ENCODE measurements at regions of chr22 and their contacts with region 1.

Region 1: DNA sequence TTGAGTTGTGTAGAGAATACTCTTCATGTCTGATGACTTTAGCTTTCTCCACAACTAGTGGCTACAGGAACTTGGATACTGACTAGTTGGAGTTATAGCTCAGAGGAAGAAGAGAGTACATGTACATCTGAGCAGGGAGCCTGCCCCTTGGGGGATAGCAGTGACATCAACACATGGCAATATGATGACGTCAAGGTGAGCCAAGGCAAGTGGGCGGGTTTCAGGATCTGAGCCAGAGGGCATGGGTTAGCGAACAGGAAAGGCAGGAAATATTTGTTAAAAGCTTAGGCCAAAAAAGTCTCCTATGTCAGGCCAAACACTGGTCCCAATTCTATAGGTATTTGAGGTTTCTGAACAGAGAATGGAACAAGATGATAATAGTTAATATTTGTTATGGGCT is 42.0 kb upstream of the HORMAD2 start:
- DNase-seq: peak; percentile 61
- H3K4me3 ChIP-seq: no peak overlapping the region
- H3K27ac ChIP-seq: no peak overlapping the region
- H3K4me1 ChIP-seq: peaks cover 12% of the 10 kb centered on the region
- H3K27me3 ChIP-seq: no peaks in the 10 kb centered on the region
- CTCF ChIP-seq: no peak

Region 2: DNA sequence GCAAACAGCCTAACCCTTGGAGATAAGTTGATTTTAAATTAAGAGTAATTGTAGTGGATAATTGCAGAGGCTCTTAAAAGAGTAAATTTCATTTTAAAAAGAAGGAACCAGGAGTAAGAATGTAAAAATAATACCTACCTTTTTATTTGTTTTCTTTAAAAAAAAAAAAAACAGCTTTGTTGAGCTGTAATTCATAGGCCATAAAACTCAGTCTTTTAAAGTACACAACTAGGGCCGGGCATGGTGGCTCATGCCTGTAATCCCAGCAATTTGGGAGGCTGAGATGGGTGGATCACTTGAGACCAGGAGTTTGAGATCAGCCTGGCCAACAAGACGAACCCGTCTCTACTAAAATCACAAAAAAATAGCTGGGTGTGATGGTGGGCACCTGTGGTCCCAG is 112.8 kb before region 1 on chr22:
- CTCF ChIA-PET with region 1: no interaction called
- dilution Hi-C with region 1: no loop called
- in situ Hi-C with region 1: no loop called
- intact Hi-C with region 1: no loop called
- DNase-seq: no peak
- H3K4me3 ChIP-seq: no peak overlapping the region
- H3K27ac ChIP-seq: no peak overlapping the region
- H3K4me1 ChIP-seq: no peaks in the 10 kb centered on the region
- H3K27me3 ChIP-seq: no peaks in the 10 kb centered on the region
- CTCF ChIP-seq: no peak

Region 3: GRCh38 chr22:30094804-30095203 is 56.6 kb after region 1 on chr22:
- CTCF ChIA-PET with region 1: no interaction called
- dilution Hi-C with region 1: loop called (anchors 5 kb)
- in situ Hi-C with region 1: no loop called
- intact Hi-C with region 1: no loop called
- DNase-seq: no peak
- H3K4me3 ChIP-seq: no peak overlapping the region
- H3K27ac ChIP-seq: no peak overlapping the region
- H3K4me1 ChIP-seq: no peaks in the 10 kb centered on the region
- H3K27me3 ChIP-seq: no peaks in the 10 kb centered on the region
- CTCF ChIP-seq: no peak

Region 4: GRCh38 chr22:30235687-30236170 is 197.5 kb after region 1 on chr22:
- CTCF ChIA-PET with region 1: no interaction called
- dilution Hi-C with region 1: no loop called
- in situ Hi-C with region 1: no loop called
- intact Hi-C with region 1: no loop called
- DNase-seq: peak; percentile 82
- H3K4me3 ChIP-seq: no peak overlapping the region
- H3K27ac ChIP-seq: no peak overlapping the region
- H3K4me1 ChIP-seq: peaks cover 23% of the 10 kb centered on the region
- H3K27me3 ChIP-seq: no peaks in the 10 kb centered on the region
- CTCF ChIP-seq: no peak